Activated CD8-positive, alpha-beta T cell treated with anti-CD3 and anti-CD28 coated beads for 36 hours (primary cell): ENCODE measurements at regions of chr6 and their contacts with region 1.

Region 1: GRCh38 chr6:36765594-36766398 is 68.2 kb downstream of the RAB44 start:
- DNase-seq: peak; percentile 90
- ATAC-seq: peak; percentile 88
- H3K4me3 Mint-ChIP-seq: no peak overlapping the region
- H3K27ac Mint-ChIP-seq: no peak overlapping the region
- H3K4me1 Mint-ChIP-seq: peaks cover 31% of the 10 kb centered on the region
- H3K27me3 Mint-ChIP-seq: no peaks in the 10 kb centered on the region
- CTCF ChIP-seq: peak; percentile 87

Region 2: DNA sequence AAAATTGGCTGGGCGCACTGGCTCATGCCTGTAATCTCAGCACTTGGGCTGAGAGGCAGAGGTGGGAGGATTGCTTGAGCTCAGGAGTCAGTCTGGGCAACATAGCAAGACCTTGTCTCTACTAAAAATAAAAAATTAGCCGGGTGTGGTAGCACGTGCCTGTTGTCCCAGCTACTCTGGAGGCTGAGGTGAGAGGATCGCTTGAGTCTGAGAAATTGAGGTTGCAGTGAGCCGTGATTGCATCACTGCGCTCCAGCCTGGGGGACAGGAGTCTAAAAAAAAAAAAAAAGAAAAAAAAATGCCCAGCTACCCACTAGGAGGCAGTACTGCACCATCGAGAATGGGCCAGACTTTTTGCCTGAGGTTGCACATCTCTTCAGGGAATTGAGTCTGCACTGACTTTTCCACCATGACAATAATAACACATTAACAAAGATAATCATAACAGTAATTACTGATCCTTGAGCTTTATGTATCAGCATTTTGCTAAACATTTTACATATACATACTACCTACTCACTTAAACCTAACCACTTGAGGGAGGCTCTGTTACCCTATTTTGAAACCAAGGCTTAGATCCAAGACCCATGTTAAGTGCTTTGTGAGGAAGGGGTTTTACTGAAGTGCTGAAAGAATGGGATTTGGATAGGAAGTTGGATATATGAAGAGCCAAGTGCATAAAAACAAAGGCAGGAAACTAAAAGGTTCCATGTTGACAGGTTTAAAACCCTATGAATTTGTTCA is 150.6 kb before region 1 on chr6:
- CTCF ChIA-PET with region 1: interaction called, 56 read pairs
- POLR2A ChIA-PET with region 1: interaction called, 7 read pairs
- intact Hi-C with region 1: no loop called
- DNase-seq: peak; percentile 57
- ATAC-seq: peak; percentile 71
- H3K4me3 Mint-ChIP-seq: no peak overlapping the region
- H3K27ac Mint-ChIP-seq: peak overlapping the region; percentile 59
- H3K4me1 Mint-ChIP-seq: peaks cover 13% of the 10 kb centered on the region
- H3K27me3 Mint-ChIP-seq: no peaks in the 10 kb centered on the region
- CTCF ChIP-seq: peak; percentile 85

Region 3: DNA sequence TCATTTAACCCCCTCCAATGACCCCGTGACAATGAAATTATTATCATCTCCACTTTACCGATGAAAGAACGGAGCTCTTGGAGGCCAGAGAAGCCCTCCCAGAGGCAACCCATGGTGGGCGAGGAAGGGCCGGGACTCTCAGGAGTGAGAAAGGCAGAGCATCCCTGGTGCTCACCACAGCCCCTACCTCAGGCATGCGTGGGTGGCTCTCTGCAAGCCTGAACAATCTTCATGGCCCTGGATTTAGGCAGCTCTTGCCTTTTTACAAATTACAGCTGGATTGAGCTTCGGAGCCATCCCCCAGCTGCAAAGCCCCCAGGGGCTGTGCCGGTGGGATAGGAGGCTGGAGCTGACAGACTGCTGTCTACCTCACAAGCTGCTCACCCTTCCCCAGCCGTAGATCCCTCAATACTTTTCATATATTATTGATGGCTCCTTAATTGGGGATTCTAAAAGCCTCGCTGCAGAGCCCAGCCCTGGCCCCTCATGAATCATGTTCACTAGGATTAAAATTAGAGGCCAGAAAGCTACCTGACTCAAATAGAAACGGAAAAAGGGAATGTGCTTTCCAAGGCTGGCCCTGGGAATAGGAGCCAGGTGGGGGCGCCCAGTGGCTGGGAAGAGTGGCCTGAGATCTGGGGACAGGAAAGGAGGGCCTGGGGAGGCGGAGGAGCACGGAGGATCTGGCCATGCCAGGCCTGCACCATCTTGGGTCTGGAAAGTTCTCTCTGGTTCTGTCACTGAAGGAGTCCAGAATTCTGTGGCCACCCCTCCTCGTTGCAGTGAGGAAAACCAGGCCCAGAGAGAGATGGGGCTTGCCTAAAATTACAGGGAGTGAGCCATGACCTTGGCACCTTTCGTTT is 44.4 kb after region 1 on chr6:
- CTCF ChIA-PET with region 1: interaction called, 12 read pairs
- POLR2A ChIA-PET with region 1: no interaction called
- intact Hi-C with region 1: no loop called
- DNase-seq: no peak
- ATAC-seq: no peak
- H3K4me3 Mint-ChIP-seq: no peak overlapping the region
- H3K27ac Mint-ChIP-seq: no peak overlapping the region
- H3K4me1 Mint-ChIP-seq: no peaks in the 10 kb centered on the region
- H3K27me3 Mint-ChIP-seq: peaks cover 2% of the 10 kb centered on the region
- CTCF ChIP-seq: no peak

Region 4: DNA sequence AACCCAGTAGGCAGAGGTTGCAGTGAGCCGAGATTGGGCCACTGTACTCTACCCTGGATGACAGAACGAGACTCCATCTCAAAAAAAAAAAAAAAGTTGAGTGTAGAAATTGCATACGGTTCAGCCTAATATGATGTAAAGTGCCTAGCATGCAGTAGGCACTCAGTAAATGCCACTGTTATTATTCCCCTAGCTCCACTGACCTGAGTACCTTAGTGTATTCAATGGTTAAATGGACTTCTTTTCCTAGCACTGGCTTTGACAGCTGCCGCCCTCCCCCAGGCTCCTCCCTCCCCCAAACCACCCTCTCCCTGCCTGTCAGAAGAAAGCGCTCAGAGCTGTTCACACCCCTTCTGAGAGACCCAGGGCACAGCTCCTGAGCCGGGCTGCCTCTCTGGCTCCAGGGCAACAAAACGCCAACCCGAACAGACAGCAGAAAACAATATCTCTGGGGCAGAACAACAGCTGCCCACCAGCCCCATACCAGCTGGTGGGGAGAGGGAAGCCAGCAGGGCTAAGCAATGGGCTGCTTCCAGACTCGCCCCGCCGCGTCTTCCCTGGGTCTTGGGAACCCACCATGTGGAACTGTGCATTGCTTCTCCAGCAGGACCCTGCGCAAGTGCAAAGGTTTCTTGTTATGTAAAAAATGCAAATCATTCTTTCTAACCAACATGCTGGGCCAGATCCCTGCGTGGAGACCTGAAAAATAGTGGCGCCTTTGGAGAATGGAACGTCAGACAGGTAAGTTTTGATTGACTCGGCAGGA is 69.0 kb after region 1 on chr6:
- CTCF ChIA-PET with region 1: interaction called, 10 read pairs
- POLR2A ChIA-PET with region 1: no interaction called
- intact Hi-C with region 1: no loop called
- DNase-seq: no peak
- ATAC-seq: no peak
- H3K4me3 Mint-ChIP-seq: no peak overlapping the region
- H3K27ac Mint-ChIP-seq: no peak overlapping the region
- H3K4me1 Mint-ChIP-seq: no peaks in the 10 kb centered on the region
- H3K27me3 Mint-ChIP-seq: peaks cover 21% of the 10 kb centered on the region
- CTCF ChIP-seq: no peak

Region 5: GRCh38 chr6:36874443-36875249 is 108.8 kb after region 1 on chr6 and contains the start of gene PPIL1:
- CTCF ChIA-PET with region 1: interaction called, 49 read pairs
- POLR2A ChIA-PET with region 1: interaction called, 3 read pairs
- intact Hi-C with region 1: no loop called
- DNase-seq: peak; percentile 88
- ATAC-seq: peak; percentile 91
- H3K4me3 Mint-ChIP-seq: peak within 1 kb of the TSS; percentile 99
- H3K27ac Mint-ChIP-seq: peak within 1 kb of the TSS; percentile 100
- H3K4me1 Mint-ChIP-seq: peaks cover 42% of the 10 kb centered on the region
- H3K27me3 Mint-ChIP-seq: peaks cover 5% of the 10 kb centered on the region
- CTCF ChIP-seq: no peak
- total RNA-seq, gene PPIL1: 34.5 to 35.6 TPM